Aorta (tissue), 5 donors: ENCODE measurements at regions of chr20 and their contacts with region 1.

Region 1: GRCh38 chr20:53773792-53774401 is 180.3 kb upstream of the ZNF217 start:
- DNase-seq: no peak
- ATAC-seq: peak; percentile 80
- H3K4me3 ChIP-seq: no peak overlapping the region
- H3K27ac ChIP-seq: peak overlapping the region in 1 of 2 donors; percentile 90
- H3K4me1 ChIP-seq: peaks cover 0 to 2% of the 10 kb centered on the region in 2 donors
- H3K27me3 ChIP-seq: no peaks in the 10 kb centered on the region

Region 2: GRCh38 chr20:51938559-51939331 is 1835.2 kb before region 1 on chr20:
- intact Hi-C with region 1: no loop called
- DNase-seq: no peak
- ATAC-seq: no peak
- H3K4me3 ChIP-seq: no peak overlapping the region
- H3K27ac ChIP-seq: no peak overlapping the region
- H3K4me1 ChIP-seq: no peaks in the 10 kb centered on the region
- H3K27me3 ChIP-seq: no peaks in the 10 kb centered on the region

Region 3: DNA sequence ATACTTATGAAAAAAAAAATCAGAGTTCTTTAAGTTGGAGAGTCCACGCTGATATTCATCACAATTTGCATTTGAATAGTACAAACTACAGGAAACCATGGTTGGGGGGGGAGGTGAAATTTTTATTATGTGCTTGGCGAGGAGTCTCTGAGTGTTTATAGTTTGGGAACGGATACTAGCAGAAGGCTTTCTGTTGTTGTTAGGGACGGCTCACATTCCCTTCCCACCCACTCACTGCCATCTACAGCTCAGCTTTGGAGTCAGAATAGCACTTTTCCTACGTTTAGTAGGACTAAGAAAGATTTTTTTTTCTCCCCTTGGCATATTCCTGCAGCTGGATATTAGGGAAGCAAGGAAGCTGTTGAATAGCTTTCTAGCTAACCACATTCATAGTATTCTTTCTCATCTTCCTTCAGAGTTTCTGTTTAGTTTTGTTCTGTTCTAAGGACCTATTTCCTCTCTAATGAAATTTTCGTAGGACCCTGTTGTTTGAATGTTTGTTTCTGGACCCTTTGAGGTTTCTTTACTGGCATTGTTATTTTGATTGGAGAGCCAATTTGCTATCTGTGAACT is 54.9 kb after region 1 on chr20:
- intact Hi-C with region 1: loop called in 1 of 2 experiments (anchors 2 kb)
- DNase-seq: no peak
- ATAC-seq: peak; percentile 84
- H3K4me3 ChIP-seq: peak overlapping the region; percentile 51 to 67
- H3K27ac ChIP-seq: peak overlapping the region; percentile 90 to 95
- H3K4me1 ChIP-seq: peaks cover 0 to 4% of the 10 kb centered on the region in 2 donors
- H3K27me3 ChIP-seq: no peaks in the 10 kb centered on the region

Region 4: DNA sequence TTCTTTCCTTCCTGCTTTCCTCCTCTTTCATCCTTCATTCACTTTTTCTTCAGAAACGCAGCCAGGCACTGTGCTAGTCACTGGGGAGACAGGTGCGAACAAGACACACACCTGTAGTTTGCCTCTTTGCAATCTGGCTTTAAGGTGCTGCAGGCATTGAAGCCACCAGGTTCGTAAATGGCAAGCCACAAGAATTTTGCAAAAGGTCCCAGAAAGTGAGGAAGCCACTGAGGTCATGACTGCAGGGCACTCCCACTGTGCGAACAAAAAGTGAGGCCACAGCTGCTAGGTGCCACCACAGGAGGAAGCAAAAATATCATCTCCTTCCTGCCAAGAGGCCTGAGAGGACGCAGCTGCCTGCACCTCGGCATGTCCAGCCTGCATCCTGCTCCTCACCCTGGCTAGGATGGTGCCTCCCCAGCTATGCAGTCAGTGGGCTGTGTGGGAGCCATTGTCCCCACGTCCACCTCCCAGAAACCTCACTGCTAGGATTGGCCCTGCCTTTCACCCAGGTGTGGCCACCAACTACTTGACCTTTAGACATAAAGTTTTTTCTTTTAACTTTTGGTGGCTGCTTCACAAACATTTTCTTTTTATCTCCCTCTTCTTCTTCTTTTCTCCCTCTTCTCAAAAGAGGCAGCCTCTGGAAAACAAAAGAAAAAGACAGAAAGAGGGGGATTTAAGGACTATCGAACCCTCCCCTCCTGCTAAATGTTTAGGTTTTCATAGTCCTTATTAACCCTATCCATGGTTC is 65.7 kb after region 1 on chr20:
- intact Hi-C with region 1: no loop called
- DNase-seq: peak in 1 of 2 donors; percentile 64
- ATAC-seq: peak; percentile 36
- H3K4me3 ChIP-seq: no peak overlapping the region
- H3K27ac ChIP-seq: no peak overlapping the region
- H3K4me1 ChIP-seq: no peaks in the 10 kb centered on the region
- H3K27me3 ChIP-seq: no peaks in the 10 kb centered on the region

Region 5: GRCh38 chr20:53869466-53870258 is 95.8 kb after region 1 on chr20:
- intact Hi-C with region 1: loop called in 1 of 2 experiments (anchors 10 kb)
- DNase-seq: peak in 1 of 2 donors; percentile 58
- ATAC-seq: peak; percentile 88
- H3K4me3 ChIP-seq: no peak overlapping the region
- H3K27ac ChIP-seq: no peak overlapping the region
- H3K4me1 ChIP-seq: no peaks in the 10 kb centered on the region
- H3K27me3 ChIP-seq: no peaks in the 10 kb centered on the region